Head of caudate nucleus (tissue), 42 donors: ENCODE measurements at regions of chr11 and their contacts with region 1.

Region 1: GRCh38 chr11:73184953-73185671 is 33.0 kb upstream of the P2RY2 start:
- DNase-seq: peak in 41 of 42 donors; percentile 38 to 84 (median 63)

Region 2: DNA sequence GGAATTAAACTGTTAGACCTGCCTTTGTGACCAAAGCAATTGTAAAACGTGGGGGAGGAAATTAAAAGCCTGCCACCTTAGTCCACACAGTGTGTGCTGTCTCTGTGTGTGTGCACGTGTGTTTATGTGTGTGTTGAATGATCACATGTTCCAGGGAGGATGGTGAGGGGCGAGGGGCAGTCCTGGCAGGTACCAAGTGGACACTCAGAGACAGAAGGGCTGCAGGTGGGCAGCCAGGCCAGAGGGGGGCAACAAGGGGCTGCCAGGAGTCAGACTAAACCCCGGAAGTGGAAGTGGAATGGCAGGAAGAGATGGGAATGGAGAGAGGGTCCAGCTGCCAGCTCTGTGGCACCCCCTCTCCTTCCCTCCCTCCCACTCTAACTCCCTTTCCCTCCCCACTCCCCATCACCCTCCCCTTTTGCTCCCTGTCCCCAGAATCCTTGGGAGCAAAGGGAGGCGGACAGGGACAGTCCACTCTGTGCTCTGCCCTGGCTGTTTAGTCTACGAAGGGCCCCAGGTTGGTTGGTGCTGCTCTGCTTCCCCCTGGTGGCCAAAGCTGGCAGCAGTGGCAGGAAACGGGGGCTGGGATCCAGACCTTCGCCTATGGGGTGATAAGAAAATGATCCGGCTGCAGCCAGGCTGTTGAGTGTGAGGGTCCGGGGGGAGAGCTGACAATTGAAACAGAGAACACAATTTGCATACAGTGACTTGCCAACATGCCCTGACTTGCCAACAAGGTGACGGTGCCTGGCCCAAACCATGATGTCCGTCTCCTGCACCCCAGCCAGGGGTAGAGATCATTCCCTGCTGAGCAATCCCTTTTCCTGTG is 57.4 kb after region 1 on chr11:
- intact Hi-C with region 1: loop called (anchors 5 kb)
- DNase-seq: peak; percentile 46 to 90 (median 78)